Right ventricle myocardium inferior (tissue), 1 donor: ENCODE measurements at regions of chr5 and their contacts with region 1.

Region 1: GRCh38 chr5:88690409-88691229 is 192.4 kb downstream of the MEF2C start:
- DNase-seq: peak; percentile 88
- ATAC-seq: peak; percentile 77

Region 2: GRCh38 chr5:87780831-87781760 is 909.5 kb before region 1 on chr5:
- intact Hi-C with region 1: loop called (anchors 2 kb)
- DNase-seq: peak; percentile 82
- ATAC-seq: peak; percentile 90

Region 3: DNA sequence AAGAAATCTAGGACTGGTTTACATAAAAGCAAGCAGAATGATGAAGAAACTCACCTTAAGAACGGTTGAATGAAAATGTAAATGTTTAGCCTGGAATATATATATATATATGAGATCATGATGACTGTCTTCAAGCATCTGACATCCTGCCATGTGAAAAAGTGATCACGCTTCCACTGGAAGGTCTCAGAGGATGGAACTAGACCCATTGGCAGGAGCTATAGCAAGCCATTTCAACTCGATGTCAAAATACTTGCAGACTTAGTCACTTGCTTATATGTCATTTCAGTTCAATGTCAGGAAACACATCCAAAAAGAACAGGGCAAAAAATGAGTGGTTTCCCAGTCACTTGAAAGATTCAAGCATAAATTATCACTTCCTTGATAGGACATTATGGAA is 399.8 kb before region 1 on chr5:
- intact Hi-C with region 1: no loop called
- DNase-seq: no peak
- ATAC-seq: no peak